Activated CD4-positive, alpha-beta T cell treated with anti-CD3 and anti-CD28 coated beads, Interleukin-2, amount 10 ng/mL, durations not matched to agents 24 days and 14 days (primary cell): ENCODE measurements at regions of chr6 and their contacts with region 1.

Region 1: GRCh38 chr6:151390276-151391032 is 905 bp downstream of the ZBTB2 start:
- DNase-seq: peak; percentile 99
- H3K4me3 Mint-ChIP-seq: peak overlapping the region; percentile 97
- H3K27ac Mint-ChIP-seq: peak overlapping the region; percentile 95
- H3K4me1 Mint-ChIP-seq: peaks cover 48% of the 10 kb centered on the region
- H3K27me3 Mint-ChIP-seq: no peaks in the 10 kb centered on the region

Region 2: DNA sequence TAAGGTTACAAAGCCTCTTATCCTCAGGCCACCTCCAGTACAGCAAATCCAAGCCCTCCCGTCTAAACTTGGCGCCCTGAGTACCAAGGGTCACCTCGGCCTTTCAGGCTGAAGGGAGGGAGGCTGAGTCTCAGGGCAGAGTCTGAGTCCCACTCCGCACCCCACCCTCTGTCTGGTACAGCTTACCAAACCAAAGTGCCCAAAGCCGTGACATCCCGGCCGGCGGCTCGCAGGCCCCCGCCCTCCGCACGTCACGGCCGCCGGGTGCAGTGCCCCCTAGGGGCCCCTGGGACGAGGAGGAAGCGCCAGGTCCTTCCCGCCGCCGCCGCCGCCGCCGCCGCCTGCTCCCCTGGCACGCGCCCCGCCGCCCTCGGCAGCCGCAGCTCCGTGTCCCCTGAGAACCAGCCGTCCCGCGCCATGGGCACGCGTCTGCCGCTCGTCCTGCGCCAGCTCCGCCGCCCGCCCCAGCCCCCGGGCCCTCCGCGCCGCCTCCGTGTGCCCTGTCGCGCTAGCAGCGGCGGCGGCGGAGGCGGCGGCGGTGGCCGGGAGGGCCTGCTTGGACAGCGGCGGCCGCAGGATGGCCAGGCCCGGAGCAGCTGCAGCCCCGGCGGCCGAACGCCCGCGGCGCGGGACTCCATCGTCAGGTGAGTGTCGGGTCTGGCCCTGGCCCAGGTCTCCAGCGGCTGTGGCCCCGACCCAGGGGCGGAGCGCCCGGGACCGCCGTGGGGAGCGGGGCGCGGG is 524.9 kb before region 1 on chr6 and contains the start of gene MTHFD1L:
- intact Hi-C with region 1: loop called (anchors 1 kb)
- DNase-seq: peak; percentile 94
- H3K4me3 Mint-ChIP-seq: peak within 1 kb of the TSS; percentile 98
- H3K27ac Mint-ChIP-seq: peak within 1 kb of the TSS; percentile 93
- H3K4me1 Mint-ChIP-seq: peaks cover 29% of the 10 kb centered on the region
- H3K27me3 Mint-ChIP-seq: peaks cover 10% of the 10 kb centered on the region
- total RNA-seq, gene MTHFD1L: 136 and 137 TPM in 2 replicates

Region 3: DNA sequence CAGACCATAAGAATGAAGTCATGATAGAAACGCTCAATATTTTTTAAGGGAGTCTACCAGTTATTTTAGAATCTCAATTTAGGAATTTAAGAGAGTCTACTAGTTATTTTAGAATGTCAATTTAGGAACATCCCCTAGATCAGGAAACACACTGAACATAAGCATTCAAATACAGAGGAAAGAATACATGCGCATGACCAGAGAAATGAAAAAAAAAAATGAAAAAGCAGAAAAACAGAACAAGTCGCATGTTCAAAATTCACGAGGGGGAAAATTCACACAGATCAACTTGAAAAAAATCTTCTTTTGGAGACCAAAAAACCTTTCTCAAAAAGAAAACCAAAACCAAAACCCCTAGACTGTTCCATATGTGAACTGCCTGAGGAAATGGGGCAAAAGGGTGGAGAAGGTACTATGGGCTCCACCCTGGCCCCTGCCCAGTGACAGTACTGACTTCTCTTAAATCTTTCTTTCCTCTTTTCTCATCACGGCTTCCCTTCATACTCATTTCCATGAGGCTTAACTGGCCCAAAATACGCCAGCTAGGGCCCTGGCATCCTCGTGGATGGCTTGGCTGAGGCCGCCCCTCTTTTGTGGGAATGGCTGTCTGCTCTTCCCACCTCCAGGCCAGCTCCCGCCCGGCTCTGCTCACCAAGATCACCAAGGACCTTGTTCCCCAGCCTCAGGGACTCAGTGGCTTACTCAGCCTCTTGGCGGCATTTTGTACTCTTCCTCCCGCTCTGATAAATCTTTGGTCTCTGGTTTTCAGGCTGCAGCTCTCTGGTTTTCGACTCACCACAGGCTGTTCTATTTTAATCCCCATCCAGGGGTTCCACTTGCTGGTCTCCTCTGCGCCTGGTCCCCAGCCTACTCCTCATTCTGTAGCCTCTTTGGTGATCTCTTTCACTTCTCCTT is 10.3 kb before region 1 on chr6:
- intact Hi-C with region 1: loop called (anchors 1 kb)
- DNase-seq: peak; percentile 81
- H3K4me3 Mint-ChIP-seq: peak overlapping the region; percentile 88
- H3K27ac Mint-ChIP-seq: peak overlapping the region; percentile 96
- H3K4me1 Mint-ChIP-seq: peaks cover 57% of the 10 kb centered on the region
- H3K27me3 Mint-ChIP-seq: no peaks in the 10 kb centered on the region

Region 4: GRCh38 chr6:152301764-152302568 is 911.5 kb after region 1 on chr6:
- intact Hi-C with region 1: loop called (anchors 5 kb)
- DNase-seq: peak; percentile 97
- H3K4me3 Mint-ChIP-seq: peak overlapping the region; percentile 94
- H3K27ac Mint-ChIP-seq: peak overlapping the region; percentile 99
- H3K4me1 Mint-ChIP-seq: peaks cover 23% of the 10 kb centered on the region
- H3K27me3 Mint-ChIP-seq: no peaks in the 10 kb centered on the region